ENCODE measurements at regions of chr6 and their contacts with region 1.

Region 1: GRCh38 chr6:37059344-37060206 is 54.1 kb downstream of the FGD2 start:
- DNase-seq: peak; percentile 75
- ATAC-seq: peak; percentile 81

Region 2: DNA sequence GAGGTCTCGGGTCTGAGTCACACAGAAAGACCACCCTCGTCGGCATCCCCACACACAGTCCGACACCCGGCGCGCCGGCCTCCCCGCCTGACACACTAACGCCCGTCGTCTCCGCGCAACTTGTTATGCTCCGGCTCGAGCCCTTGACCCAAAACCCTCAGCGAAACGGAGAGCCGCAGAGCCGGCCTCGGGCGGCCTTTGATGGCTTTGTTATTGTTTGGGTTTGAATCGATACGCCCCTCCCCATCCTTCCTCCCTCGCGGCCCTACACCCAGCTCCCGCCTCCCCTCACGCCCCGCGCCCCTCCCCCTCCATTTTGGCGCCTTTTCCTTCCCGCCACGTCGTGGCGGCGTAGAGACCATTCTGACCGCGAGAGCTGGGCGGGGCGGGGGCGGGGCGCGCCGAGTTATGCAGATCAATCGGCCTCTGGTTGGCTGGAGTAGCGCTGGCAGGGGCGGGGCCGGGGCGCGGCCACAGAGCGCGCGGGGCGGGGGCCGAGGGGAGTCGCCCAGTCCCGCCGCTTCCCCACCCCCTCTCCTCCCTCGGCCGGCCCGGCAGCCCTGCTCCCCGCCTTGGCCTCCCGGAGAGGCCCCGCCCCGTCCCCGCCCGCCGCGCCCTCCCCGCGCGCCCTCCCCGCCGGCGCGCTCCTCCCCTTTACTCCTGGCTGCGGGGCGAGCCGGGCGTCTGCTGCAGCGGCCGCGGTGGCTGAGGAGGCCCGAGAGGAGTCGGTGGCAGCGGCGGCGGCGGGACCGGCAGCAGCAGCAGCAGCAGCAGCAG is 110.1 kb after region 1 on chr6 and contains the start of gene PIM1:
- intact Hi-C with region 1: loop called (anchors 5 kb)
- DNase-seq: peak; percentile 100
- ATAC-seq: peak; percentile 92
- total RNA-seq, gene PIM1: 35.0 TPM